ENCODE measurements at regions of chr10 and their contacts with region 1.

Region 1: GRCh38 chr10:32367793-32368453 is 21.0 kb upstream of the EPC1 start:
- DNase-seq: peak; percentile 91
- H3K4me3 Mint-ChIP-seq: peak overlapping the region; percentile 41
- H3K27ac Mint-ChIP-seq: no peak overlapping the region
- H3K4me1 Mint-ChIP-seq: peaks cover 32% of the 10 kb centered on the region
- H3K27me3 Mint-ChIP-seq: no peaks in the 10 kb centered on the region

Region 2: GRCh38 chr10:31479752-31480151 is 888.2 kb before region 1 on chr10:
- intact Hi-C with region 1: no loop called
- DNase-seq: no peak
- H3K4me3 Mint-ChIP-seq: no peak overlapping the region
- H3K27ac Mint-ChIP-seq: no peak overlapping the region
- H3K4me1 Mint-ChIP-seq: no peaks in the 10 kb centered on the region
- H3K27me3 Mint-ChIP-seq: no peaks in the 10 kb centered on the region

Region 3: DNA sequence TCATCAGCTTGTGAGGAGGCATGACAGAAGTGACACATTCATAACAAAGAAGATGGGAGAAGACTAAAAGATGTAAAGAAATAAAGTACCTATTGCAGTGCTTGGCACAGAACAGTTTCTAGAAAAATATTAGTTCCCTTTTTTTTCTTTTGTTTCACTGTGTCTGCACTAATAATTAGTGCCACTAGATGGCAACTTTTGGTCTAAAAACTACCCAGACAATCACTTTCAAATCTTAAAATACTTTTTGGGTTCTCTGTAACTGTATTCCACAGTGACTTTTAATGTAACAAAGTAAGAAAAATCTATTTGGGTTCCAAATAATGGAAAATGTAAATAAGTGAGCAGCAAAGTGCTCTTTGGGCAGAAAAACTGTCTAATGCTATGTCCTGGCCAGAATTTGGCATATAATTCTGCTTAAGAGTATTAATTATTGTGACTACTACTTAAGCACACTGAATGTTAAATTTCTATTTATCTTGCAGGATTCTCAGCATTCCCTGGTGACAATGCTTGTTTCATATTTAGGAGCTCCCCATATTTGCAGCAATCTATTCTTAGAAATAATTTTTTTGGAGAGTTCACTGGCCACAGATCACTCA is 176.9 kb before region 1 on chr10:
- intact Hi-C with region 1: loop called (anchors 1 kb)
- DNase-seq: peak; percentile 65
- H3K4me3 Mint-ChIP-seq: no peak overlapping the region
- H3K27ac Mint-ChIP-seq: peak overlapping the region; percentile 32
- H3K4me1 Mint-ChIP-seq: peaks cover 4% of the 10 kb centered on the region
- H3K27me3 Mint-ChIP-seq: peaks cover 5% of the 10 kb centered on the region

Region 4: GRCh38 chr10:32256613-32257437 is 111.1 kb before region 1 on chr10:
- intact Hi-C with region 1: loop called (anchors 1 kb)
- DNase-seq: peak; percentile 90
- H3K4me3 Mint-ChIP-seq: no peak overlapping the region
- H3K27ac Mint-ChIP-seq: no peak overlapping the region
- H3K4me1 Mint-ChIP-seq: peaks cover 18% of the 10 kb centered on the region
- H3K27me3 Mint-ChIP-seq: no peaks in the 10 kb centered on the region

Region 5: DNA sequence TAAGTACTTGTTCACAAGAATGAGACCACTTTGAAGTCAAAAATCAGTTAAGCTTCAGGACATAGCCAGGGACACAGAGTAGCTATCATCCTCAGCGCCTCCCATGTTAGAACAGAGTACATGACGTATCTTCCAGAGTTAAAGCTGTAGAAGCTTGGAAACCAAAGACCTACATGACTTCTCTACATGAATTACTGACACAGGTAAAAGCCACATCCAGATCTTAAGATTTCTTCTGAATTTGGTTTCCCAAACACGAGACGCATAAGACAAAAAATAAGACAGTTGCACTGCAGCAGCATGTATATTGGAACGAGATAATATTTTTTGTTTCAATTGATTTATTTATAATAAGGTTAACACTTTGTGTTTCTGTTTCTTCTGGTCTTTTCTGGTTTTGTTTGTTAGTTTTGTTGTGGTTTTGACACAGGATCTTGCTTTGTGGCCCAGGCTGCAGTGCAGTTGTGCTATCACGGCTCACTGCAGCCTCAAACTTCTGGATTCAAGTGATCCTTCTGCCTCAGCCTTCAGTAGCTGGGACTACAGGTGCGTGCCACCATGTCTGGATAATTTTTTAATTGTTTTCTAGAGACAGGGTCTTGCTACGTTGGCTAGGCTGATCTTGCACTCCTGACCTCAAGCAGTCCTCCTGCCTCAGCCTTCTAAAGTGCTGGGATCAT is 10.7 kb before region 1 on chr10:
- intact Hi-C with region 1: loop called (anchors 1 kb)
- DNase-seq: peak; percentile 80
- H3K4me3 Mint-ChIP-seq: peak overlapping the region; percentile 76
- H3K27ac Mint-ChIP-seq: peak overlapping the region; percentile 83
- H3K4me1 Mint-ChIP-seq: peaks cover 52% of the 10 kb centered on the region
- H3K27me3 Mint-ChIP-seq: no peaks in the 10 kb centered on the region